Activated CD8-positive, alpha-beta T cell treated with anti-CD3 and anti-CD28 coated beads, Interleukin-2, amount 10 ng/mL, durations not matched to agents 7 days and 5 days (primary cell): ENCODE measurements at regions of chr19 and their contacts with region 1.

Region 1: GRCh38 chr19:45809643-45810159 is 5.4 kb downstream of the RSPH6A start:
- DNase-seq: no peak
- ATAC-seq: peak; percentile 35
- H3K4me3 Mint-ChIP-seq: peak overlapping the region; percentile 31
- H3K27ac Mint-ChIP-seq: no peak overlapping the region
- H3K4me1 Mint-ChIP-seq: peaks cover 14% of the 10 kb centered on the region
- H3K27me3 Mint-ChIP-seq: peaks cover 3% of the 10 kb centered on the region

Region 2: GRCh38 chr19:45798995-45799517 is 10.6 kb before region 1 on chr19:
- CTCF ChIA-PET with region 1: interaction called, 12 read pairs
- POLR2A ChIA-PET with region 1: no interaction called
- DNase-seq: peak; percentile 65
- ATAC-seq: peak; percentile 66
- H3K4me3 Mint-ChIP-seq: no peak overlapping the region
- H3K27ac Mint-ChIP-seq: no peak overlapping the region
- H3K4me1 Mint-ChIP-seq: peaks cover 5% of the 10 kb centered on the region
- H3K27me3 Mint-ChIP-seq: peaks cover 34% of the 10 kb centered on the region